H1 (cell line): ENCODE measurements at regions of chr11 and their contacts with region 1.

Region 1: GRCh38 chr11:45180179-45180842 is 33.9 kb downstream of the PRDM11 start:
- DNase-seq: peak in 1 of 2 experiments; percentile 81
- H3K4me3 ChIP-seq: peak overlapping the region; percentile 43 to 69 (median 46)
- H3K27ac ChIP-seq: no peak overlapping the region
- H3K4me1 ChIP-seq: peaks cover 0 to 17% (median 11%) of the 10 kb centered on the region in 4 experiments; a peak in 6 of 7 replicates
- H3K27me3 ChIP-seq: no peaks in the 10 kb centered on the region
- CTCF ChIP-seq: peak in 2 of 3 experiments; percentile 30 to 32; a peak in 2 of 4 replicates
- EP300 ChIP-seq: no peak
- POLR2A ChIP-seq: no peak
- RAD21 ChIP-seq: no peak

Region 2: GRCh38 chr11:45158198-45158731 is 22.0 kb before region 1 on chr11:
- CTCF ChIA-PET with region 1: interaction called, 13 read pairs
- POLR2A ChIA-PET with region 1: interaction called, 5 read pairs
- DNase-seq: no peak
- H3K4me3 ChIP-seq: no peak overlapping the region
- H3K27ac ChIP-seq: no peak overlapping the region
- H3K4me1 ChIP-seq: peaks cover 0 to 6% (median 1%) of the 10 kb centered on the region in 4 experiments; a peak in 2 of 7 replicates
- H3K27me3 ChIP-seq: no peaks in the 10 kb centered on the region
- CTCF ChIP-seq: no peak
- EP300 ChIP-seq: no peak
- POLR2A ChIP-seq: no peak
- RAD21 ChIP-seq: no peak

Region 3: GRCh38 chr11:45193695-45194094 is 13.4 kb after region 1 on chr11:
- CTCF ChIA-PET with region 1: interaction called, 30 read pairs
- POLR2A ChIA-PET with region 1: interaction called, 3 read pairs
- DNase-seq: no peak
- H3K4me3 ChIP-seq: no peak overlapping the region
- H3K27ac ChIP-seq: no peak overlapping the region
- H3K4me1 ChIP-seq: no peaks in the 10 kb centered on the region
- H3K27me3 ChIP-seq: no peaks in the 10 kb centered on the region
- CTCF ChIP-seq: no peak
- EP300 ChIP-seq: no peak
- POLR2A ChIP-seq: no peak
- RAD21 ChIP-seq: no peak

Region 4: GRCh38 chr11:45204761-45205160 is 24.4 kb after region 1 on chr11:
- CTCF ChIA-PET with region 1: interaction called, 23 read pairs
- POLR2A ChIA-PET with region 1: interaction called, 10 read pairs
- DNase-seq: no peak
- H3K4me3 ChIP-seq: no peak overlapping the region
- H3K27ac ChIP-seq: no peak overlapping the region
- H3K4me1 ChIP-seq: peaks cover 3 to 14% (median 7%) of the 10 kb centered on the region in 4 experiments
- H3K27me3 ChIP-seq: no peaks in the 10 kb centered on the region
- CTCF ChIP-seq: peak; percentile 52 to 60 (median 56)
- EP300 ChIP-seq: no peak
- POLR2A ChIP-seq: no peak
- RAD21 ChIP-seq: peak; percentile 58 to 69

Region 5: DNA sequence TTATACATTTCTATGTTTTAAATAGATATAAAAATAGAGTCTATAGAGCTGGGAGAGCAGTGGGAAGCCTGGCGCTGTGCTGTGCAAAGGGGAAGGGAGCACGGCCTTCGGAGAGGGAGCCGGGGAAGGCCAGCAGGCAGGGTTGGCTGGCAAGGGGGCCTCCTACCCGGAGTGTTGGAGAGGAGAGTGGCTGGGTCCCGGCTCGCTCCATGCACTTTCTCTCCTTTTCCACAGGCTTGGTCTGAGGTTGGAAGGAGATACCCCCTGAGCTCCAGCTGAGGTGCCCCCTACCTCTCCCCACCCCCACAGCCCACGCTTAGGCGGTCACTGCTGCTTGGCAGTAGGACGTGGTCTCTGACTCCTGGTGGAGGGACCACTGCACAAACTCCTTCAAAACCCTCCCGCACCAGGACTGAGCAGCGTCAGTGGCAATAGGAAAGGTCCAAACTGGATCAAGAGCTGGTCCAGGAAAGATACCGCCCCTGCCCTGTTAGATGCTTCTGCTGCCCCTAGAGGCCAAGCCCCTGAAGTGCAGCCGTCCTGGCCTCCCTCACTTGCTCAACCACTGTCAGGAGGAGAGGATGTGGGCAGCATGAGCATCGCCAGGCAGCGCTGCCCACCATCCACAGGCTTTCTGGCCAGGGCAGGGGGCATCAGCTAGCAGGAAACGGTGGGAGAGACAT is 53.0 kb after region 1 on chr11:
- CTCF ChIA-PET with region 1: interaction called, 29 read pairs
- POLR2A ChIA-PET with region 1: no interaction called
- DNase-seq: peak; percentile 53 to 94
- H3K4me3 ChIP-seq: peak overlapping the region in 1 of 4 experiments; percentile 22; a peak in 1 of 8 replicates
- H3K27ac ChIP-seq: no peak overlapping the region
- H3K4me1 ChIP-seq: peaks cover 0 to 4% (median 2%) of the 10 kb centered on the region in 4 experiments; a peak in 2 of 7 replicates
- H3K27me3 ChIP-seq: no peaks in the 10 kb centered on the region
- CTCF ChIP-seq: peak; percentile 73 to 98 (median 94)
- EP300 ChIP-seq: no peak
- POLR2A ChIP-seq: no peak
- RAD21 ChIP-seq: peak; percentile 52 to 59